H1 (cell line): ENCODE measurements at regions of chr15 and their contacts with region 1.

Region 1: GRCh38 chr15:40421246-40422157 is 15.9 kb downstream of the IVD start:
- DNase-seq: peak; percentile 62 to 95
- H3K4me3 ChIP-seq: peak overlapping the region in 1 of 4 experiments; percentile 45; a peak in 3 of 8 replicates
- H3K27ac ChIP-seq: no peak overlapping the region
- H3K4me1 ChIP-seq: peaks cover 0 to 6% (median 3%) of the 10 kb centered on the region in 4 experiments; a peak in 4 of 7 replicates
- H3K27me3 ChIP-seq: peaks cover 0 to 2% (median 0%) of the 10 kb centered on the region in 4 experiments; a peak in 1 of 7 replicates
- CTCF ChIP-seq: peak; percentile 95 to 97 (median 96)
- EP300 ChIP-seq: no peak
- POLR2A ChIP-seq: peak in 1 of 2 experiments; percentile 38; a peak in 1 of 3 replicates
- RAD21 ChIP-seq: peak; percentile 91 to 95

Region 2: DNA sequence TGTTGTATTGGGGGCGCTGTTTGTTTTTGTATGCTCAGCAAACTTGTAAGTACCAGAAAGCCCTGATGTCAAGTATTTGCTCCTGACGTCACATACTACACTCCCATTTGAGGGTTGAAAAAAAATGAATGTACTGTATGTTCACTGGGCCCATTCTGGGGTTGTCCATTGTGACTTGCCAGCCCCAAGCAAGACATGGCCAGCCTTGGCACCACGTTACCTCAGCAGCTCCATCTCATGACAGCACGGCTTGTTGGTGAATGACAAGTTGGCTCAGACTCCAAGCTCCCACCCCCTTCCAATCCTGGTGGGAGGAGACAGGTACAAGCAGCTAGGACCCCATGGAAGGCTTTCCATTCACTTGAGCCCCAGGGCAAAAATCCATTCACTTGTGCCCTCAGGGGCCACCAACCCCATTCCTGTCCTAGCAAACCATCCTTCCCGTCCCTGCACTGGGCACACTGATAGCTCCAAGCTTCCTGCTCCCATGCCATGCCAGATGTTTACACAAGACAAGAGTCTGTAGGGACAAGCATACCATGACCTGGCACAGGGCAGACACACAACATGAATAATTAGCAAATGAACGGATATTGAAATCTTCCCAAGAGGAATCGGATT is 69.1 kb before region 1 on chr15:
- CTCF ChIA-PET with region 1: interaction called, 11 read pairs
- POLR2A ChIA-PET with region 1: interaction called, 4 read pairs
- DNase-seq: no peak
- H3K4me3 ChIP-seq: no peak overlapping the region
- H3K27ac ChIP-seq: no peak overlapping the region
- H3K4me1 ChIP-seq: peaks cover 7 to 17% (median 14%) of the 10 kb centered on the region in 4 experiments
- H3K27me3 ChIP-seq: peaks cover 0 to 6% (median 4%) of the 10 kb centered on the region in 4 experiments; a peak in 3 of 7 replicates
- CTCF ChIP-seq: no peak
- EP300 ChIP-seq: no peak
- POLR2A ChIP-seq: no peak
- RAD21 ChIP-seq: no peak

Region 3: DNA sequence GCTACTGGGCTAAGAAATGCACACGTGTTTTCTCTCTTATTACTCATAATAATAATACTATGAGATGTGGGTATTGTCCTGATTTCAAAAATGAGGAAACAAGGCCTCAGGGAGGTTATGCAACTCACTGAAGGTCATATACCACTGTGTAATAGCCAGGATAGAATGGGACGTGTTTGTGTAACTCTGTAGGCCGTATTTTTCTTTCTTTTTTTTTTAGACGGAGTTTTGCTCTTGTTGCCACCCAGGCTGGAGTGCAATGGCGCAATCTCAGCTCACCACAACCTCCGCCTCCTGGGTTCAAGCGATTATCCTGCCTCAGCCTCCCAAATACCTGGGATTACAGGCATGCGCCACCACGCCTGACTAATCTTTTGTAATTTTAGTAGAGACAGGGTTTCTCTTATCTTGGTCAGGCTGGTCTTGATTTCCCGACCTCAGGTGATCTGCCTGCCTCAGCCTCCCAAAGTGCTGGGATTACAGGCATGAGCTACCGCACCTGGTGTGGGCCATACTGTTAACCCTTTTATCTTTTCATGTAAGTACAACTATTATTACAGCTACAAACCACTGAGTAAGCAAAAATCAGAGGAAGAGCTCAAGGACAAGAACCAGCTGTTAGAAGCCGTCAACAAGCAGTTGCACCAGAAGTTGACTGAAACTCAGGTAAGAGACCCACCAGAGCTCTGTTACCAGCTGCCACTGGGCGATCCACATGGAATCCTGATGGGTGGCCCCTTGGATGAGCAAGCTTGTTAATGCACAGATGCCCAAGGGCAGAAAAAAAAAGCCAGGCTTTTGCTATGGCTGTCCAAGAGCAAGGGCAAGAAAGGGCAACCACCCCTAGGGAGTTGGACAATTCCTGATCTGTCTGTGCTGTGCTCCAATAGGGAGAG is 32.3 kb before region 1 on chr15:
- CTCF ChIA-PET with region 1: interaction called, 6 read pairs
- POLR2A ChIA-PET with region 1: interaction called, 12 read pairs
- DNase-seq: no peak
- H3K4me3 ChIP-seq: no peak overlapping the region
- H3K27ac ChIP-seq: no peak overlapping the region
- H3K4me1 ChIP-seq: no peaks in the 10 kb centered on the region; a peak in 1 of 7 replicates
- H3K27me3 ChIP-seq: no peaks in the 10 kb centered on the region
- CTCF ChIP-seq: no peak
- EP300 ChIP-seq: no peak
- POLR2A ChIP-seq: no peak
- RAD21 ChIP-seq: no peak

Region 4: DNA sequence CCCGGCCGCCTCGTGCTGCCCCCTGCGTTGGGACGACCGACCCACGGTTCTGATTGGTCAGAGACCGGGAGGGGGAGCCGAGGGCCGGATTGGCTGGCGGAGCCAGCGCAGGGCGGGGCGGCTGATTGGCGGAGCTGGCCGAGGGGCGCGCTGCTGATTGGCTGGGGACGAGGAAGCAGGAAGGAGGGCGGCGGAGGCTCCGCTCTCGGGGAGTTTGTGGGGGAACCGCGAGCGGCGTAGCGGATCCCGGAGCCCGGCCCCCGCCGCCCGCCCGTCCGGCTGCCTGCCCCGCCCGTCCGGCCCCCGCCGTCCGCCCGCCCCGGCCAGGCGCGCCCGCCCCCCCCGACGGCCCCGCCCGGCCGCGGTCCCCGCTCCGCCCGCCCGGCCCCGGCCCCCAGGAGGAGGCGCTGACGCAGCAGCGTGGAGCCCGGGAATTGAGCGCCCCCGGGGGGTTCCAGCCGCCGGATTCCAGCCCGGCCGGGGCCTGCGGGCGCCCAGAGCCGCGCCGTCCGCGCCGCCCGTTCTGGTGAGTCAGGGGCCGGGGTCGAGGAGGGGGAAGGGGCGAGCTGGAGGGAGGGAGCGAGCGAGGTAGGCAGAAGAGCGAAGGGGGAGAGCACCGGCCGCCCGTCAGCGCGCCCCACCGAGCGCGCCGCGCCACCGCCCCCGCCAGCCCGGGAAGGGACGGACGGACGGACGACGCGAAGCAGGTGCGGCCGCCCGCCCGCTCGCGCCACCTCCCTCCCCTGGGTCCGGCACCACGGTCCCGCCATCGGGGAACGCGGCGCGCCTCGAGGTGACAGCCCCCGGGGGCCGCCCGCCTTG is 19.5 kb after region 1 on chr15 and contains the start of gene BAHD1:
- CTCF ChIA-PET with region 1: interaction called, 7 read pairs
- POLR2A ChIA-PET with region 1: interaction called, 23 read pairs
- DNase-seq: peak; percentile 92 to 98
- H3K4me3 ChIP-seq: peak within 1 kb of the TSS; percentile 73 to 97 (median 81)
- H3K27ac ChIP-seq: peak within 1 kb of the TSS; percentile 75
- H3K4me1 ChIP-seq: peaks cover 28 to 48% (median 38%) of the 10 kb centered on the region in 4 experiments
- H3K27me3 ChIP-seq: peaks cover 0 to 9% (median 0%) of the 10 kb centered on the region in 4 experiments; a peak in 4 of 7 replicates
- CTCF ChIP-seq: peak in 1 of 3 experiments; percentile 3; a peak in 1 of 4 replicates
- EP300 ChIP-seq: no peak
- POLR2A ChIP-seq: no peak
- RAD21 ChIP-seq: peak; percentile 2 to 16; a peak in 2 of 4 replicates
- total RNA-seq, gene BAHD1: 38.9 and 40.0 TPM in 2 replicates